Right ventricle myocardium superior (tissue), 1 donor: ENCODE measurements at regions of chr1 and their contacts with region 1.

Region 1: GRCh38 chr1:15617175-15617880 is at the start of gene DDI2:
- DNase-seq: peak; percentile 97
- ATAC-seq: peak; percentile 93
- total RNA-seq, gene DDI2: 19.4 TPM

Region 2: GRCh38 chr1:15684468-15685291 is 67.4 kb after region 1 on chr1:
- intact Hi-C with region 1: loop called (anchors 10 kb)
- DNase-seq: peak; percentile 67
- ATAC-seq: peak; percentile 44